Ascending aorta (tissue), 2 donors: ENCODE measurements at regions of chr11 and their contacts with region 1.

Region 1: GRCh38 chr11:66421492-66422205 is 814 bp downstream of the NPAS4 start:
- DNase-seq: peak; percentile 40 to 96
- H3K4me3 ChIP-seq: peak overlapping the region in 1 of 2 donors; percentile 37
- H3K27ac ChIP-seq: peak overlapping the region; percentile 21 to 62
- H3K4me1 ChIP-seq: peaks cover 22 to 42% of the 10 kb centered on the region in 2 donors
- H3K27me3 ChIP-seq: no peaks in the 10 kb centered on the region
- CTCF ChIP-seq: no peak

Region 2: GRCh38 chr11:66288671-66289547 is 132.7 kb before region 1 on chr11 and contains the start of gene YIF1A:
- intact Hi-C with region 1: loop called (anchors 2 kb)
- DNase-seq: peak; percentile 98 to 99
- H3K4me3 ChIP-seq: peak within 1 kb of the TSS; percentile 72 to 74
- H3K27ac ChIP-seq: peak within 1 kb of the TSS; percentile 94
- H3K4me1 ChIP-seq: peaks cover 8 to 22% of the 10 kb centered on the region in 2 donors
- H3K27me3 ChIP-seq: peaks cover 8% of the 10 kb centered on the region
- CTCF ChIP-seq: no peak
- total RNA-seq, gene YIF1A: 161 TPM

Region 3: DNA sequence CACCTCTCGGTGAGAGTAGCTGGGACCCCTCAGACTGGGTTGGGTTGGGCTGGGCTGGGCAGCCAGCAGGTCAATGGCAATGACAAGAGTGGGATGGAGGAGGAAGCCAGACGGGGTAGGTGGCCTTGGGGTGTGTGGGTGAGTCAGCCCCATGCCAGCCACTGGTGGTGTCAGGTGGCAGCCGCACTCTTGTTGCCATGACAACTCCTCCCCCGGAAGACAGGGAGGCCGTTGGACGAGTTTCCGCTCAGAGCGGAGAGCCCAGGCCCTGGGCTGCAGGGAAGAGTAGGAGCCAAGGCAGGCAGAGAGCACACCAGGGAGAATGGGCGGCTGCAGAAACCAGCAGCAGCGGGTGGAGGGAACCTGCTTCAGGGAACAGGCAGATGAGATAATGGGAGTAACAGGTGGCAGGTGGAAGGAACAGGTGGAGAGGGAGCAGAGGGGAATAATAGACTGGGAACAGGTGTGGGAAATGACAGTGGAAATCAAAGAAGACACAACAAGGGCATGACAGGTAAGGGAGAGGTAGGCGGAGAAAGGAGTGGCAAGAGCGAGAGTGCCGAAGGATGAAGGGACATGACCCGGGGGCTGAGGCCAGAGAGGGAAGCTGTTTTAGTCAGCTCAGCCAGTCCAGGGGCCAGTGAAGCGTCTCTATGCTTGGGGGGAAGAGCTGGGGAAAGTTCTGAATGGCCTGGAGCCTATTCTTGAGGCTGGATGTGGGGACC is 298.7 kb after region 1 on chr11:
- intact Hi-C with region 1: no loop called
- DNase-seq: no peak
- H3K4me3 ChIP-seq: no peak overlapping the region
- H3K27ac ChIP-seq: no peak overlapping the region
- H3K4me1 ChIP-seq: no peaks in the 10 kb centered on the region
- H3K27me3 ChIP-seq: no peaks in the 10 kb centered on the region
- CTCF ChIP-seq: no peak